ENCODE measurements at regions of chr17 and their contacts with region 1.

Region 1: DNA sequence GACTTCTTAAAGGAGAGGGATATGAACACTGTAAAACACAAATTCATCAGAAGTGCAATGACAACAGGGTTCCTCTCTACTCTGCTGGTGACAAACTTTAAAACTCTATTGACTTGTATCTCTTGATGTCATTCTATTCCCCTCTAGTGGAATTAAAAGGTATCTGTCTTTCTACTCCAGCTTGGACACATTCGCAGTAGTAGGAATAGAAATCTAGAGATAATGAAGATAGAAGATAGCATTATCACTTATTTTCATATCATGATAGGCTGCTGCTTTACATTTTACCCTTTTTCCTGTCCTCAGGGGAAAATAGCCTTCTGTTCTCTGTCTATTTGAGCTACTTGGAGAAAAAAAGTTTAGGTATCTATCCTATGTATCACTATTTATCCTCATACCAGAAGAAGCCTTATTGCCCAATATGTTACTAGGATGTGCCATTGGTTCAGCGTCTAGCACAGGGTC is 209.6 kb upstream of the CACNG5 start:
- DNase-seq: no peak
- ATAC-seq: peak in 2 of 4 donors; percentile 50 to 52
- H3K4me3 ChIP-seq: no peak overlapping the region
- H3K27ac ChIP-seq: no peak overlapping the region
- H3K4me1 ChIP-seq: peaks cover 0 to 4% (median 0%) of the 10 kb centered on the region in 12 donors
- H3K27me3 ChIP-seq: no peaks in the 10 kb centered on the region
- CTCF ChIP-seq: peak; percentile 30 to 65 (median 50)
- POLR2A ChIP-seq: no peak

Region 2: GRCh38 chr17:65231662-65232335 is 1393.5 kb before region 1 on chr17:
- intact Hi-C with region 1: loop called in 1 of 10 experiments (anchors 5 kb)
- DNase-seq: peak in 3 of 5 donors; percentile 19 to 37 (median 29)
- ATAC-seq: peak; percentile 61 to 88 (median 80)
- H3K4me3 ChIP-seq: no peak overlapping the region
- H3K27ac ChIP-seq: no peak overlapping the region
- H3K4me1 ChIP-seq: peaks cover 0 to 14% (median 0%) of the 10 kb centered on the region in 12 donors
- H3K27me3 ChIP-seq: peaks cover 0 to 23% (median 0%) of the 10 kb centered on the region in 9 donors
- CTCF ChIP-seq: peak; percentile 27 to 69 (median 54)
- POLR2A ChIP-seq: no peak

Region 3: DNA sequence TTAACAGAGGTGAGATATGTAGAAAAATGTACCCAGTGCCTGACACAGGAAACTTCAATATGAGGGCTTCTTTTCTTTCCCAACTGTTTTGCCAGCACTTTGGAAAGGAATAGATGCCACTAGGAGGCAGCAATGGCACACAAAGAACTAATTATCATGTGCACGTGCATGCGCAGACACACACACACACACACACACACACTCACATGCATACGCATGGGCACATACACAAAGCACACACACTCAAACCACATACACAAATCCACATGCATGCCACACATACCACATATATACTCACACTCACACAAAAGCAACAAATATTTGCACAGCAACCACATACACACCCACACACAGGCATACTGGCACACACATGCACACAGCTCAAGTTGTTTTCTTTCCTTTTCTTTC is 424.7 kb before region 1 on chr17:
- intact Hi-C with region 1: loop called in 2 of 10 experiments (anchors 2 to 10 kb)
- DNase-seq: peak in 3 of 5 donors; percentile 14 to 42 (median 36)
- ATAC-seq: peak in 2 of 4 donors; percentile 18 to 46
- H3K4me3 ChIP-seq: no peak overlapping the region
- H3K27ac ChIP-seq: no peak overlapping the region
- H3K4me1 ChIP-seq: no peaks in the 10 kb centered on the region
- H3K27me3 ChIP-seq: no peaks in the 10 kb centered on the region
- CTCF ChIP-seq: peak; percentile 32 to 63 (median 46)
- POLR2A ChIP-seq: no peak

Region 4: GRCh38 chr17:66248285-66248684 is 377.1 kb before region 1 on chr17:
- intact Hi-C with region 1: loop called in 2 of 10 experiments (anchors 5 to 10 kb)
- DNase-seq: peak in 2 of 5 donors; percentile 35 to 48
- ATAC-seq: peak; percentile 73 to 95 (median 90)
- H3K4me3 ChIP-seq: no peak overlapping the region
- H3K27ac ChIP-seq: peak overlapping the region in 1 of 12 donors; percentile 22
- H3K4me1 ChIP-seq: peaks cover 0 to 6% (median 0%) of the 10 kb centered on the region in 12 donors
- H3K27me3 ChIP-seq: no peaks in the 10 kb centered on the region
- CTCF ChIP-seq: no peak
- POLR2A ChIP-seq: no peak

Region 5: GRCh38 chr17:66255112-66255511 is 370.2 kb before region 1 on chr17:
- intact Hi-C with region 1: loop called in 9 of 10 experiments (anchors 1 to 10 kb)
- DNase-seq: peak in 1 of 5 donors; percentile 11
- ATAC-seq: peak in 3 of 4 donors; percentile 79 to 85 (median 80)
- H3K4me3 ChIP-seq: no peak overlapping the region
- H3K27ac ChIP-seq: no peak overlapping the region
- H3K4me1 ChIP-seq: no peaks in the 10 kb centered on the region
- H3K27me3 ChIP-seq: no peaks in the 10 kb centered on the region
- CTCF ChIP-seq: peak; percentile 39 to 83 (median 70)
- POLR2A ChIP-seq: no peak